Activated naive CD4-positive, alpha-beta T cell treated with anti-CD3 and anti-CD28 coated beads for 36 hours (primary cell): ENCODE measurements at regions of chr14 and their contacts with region 1.

Region 1: GRCh38 chr14:57390028-57390805 is at the start of gene NAA30:
- DNase-seq: peak; percentile 95
- H3K4me3 Mint-ChIP-seq: peak within 1 kb of the TSS; percentile 89
- H3K27ac Mint-ChIP-seq: peak within 1 kb of the TSS; percentile 93
- H3K4me1 Mint-ChIP-seq: peaks cover 35% of the 10 kb centered on the region
- H3K27me3 Mint-ChIP-seq: no peaks in the 10 kb centered on the region
- total RNA-seq, gene NAA30: 12.3 to 12.5 TPM

Region 2: DNA sequence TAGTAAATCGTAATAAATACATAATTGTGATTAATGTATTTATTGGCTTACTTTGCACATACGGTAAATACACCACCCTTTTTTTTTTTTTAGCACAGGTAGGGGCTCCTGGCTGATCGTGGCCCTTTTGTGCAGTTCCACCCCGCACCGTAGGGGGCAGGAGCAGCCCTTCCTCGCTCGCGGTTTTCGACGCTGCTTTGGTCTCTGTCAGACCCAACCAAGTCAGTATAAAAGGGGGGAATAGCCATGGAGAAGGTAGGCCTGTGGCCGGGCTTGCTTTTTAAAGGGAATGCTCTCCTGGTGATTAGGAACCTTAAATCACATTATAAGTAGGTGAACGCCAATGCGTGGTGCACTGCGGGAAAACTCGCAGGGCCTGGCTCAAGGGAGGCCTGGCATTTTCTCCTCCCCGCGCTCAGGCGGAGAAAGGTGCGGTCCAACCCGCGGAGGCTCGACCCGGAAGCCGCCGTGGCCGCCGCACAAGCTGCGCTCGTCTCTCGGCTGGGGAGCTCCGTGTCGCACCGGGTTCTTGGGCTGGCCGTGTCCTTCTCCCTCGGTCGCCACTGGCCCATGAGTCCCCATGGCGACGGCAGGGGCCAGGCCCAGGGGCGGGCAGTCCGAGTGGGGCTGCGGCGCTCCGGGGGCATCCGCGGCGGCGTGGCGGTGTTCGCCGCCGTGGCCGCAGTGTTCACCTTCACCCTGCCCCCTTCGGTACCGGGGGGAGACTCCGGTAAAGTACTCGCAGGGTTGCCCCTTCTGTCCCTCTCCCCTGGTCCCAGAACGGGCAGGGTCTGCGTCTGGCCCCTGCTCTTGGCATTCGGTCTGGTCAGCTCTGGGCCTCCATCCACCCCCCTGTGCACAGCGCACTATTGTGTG is 810.6 kb before region 1 on chr14 and contains the start of gene TMEM260:
- CTCF ChIA-PET with region 1: no interaction called
- intact Hi-C with region 1: loop called (anchors 2 kb)
- DNase-seq: peak; percentile 93
- H3K4me3 Mint-ChIP-seq: peak within 1 kb of the TSS; percentile 88
- H3K27ac Mint-ChIP-seq: peak within 1 kb of the TSS; percentile 93
- H3K4me1 Mint-ChIP-seq: peaks cover 35% of the 10 kb centered on the region
- H3K27me3 Mint-ChIP-seq: no peaks in the 10 kb centered on the region
- total RNA-seq, gene TMEM260: 9.6 to 11.9 TPM

Region 3: DNA sequence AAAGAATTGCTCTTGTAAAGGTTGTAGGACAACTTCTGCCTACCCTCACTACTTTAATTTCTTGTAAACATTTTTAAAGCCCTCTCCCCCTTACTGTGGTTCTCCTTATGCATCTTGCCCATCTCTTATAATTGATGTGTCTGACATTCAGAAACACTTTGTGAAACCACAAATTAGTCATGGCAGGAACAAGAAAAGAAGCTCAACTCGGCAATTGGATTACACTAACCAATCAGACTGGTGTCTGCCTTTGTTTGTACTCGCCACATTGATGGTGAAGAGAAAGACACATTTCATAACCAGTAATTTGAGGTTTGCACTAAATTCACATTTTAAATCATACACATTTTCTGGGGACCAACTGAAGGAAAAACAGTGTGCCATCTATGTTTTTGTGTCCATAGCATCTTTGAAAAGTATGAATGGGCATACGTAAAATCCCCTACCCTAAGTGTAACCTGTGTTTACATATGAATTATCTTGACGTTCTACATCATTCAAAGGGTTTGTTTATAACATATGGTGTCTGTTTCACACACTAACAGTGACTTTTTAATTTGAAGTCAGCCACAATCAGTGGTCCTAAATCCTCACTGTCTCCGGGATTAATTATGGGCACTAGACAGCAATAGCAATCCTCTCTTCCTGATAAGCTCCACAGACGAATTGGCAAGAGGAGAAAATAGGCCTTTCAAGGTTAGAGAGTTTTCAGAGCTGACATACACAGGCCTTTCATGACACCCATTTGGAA is 629.9 kb before region 1 on chr14:
- CTCF ChIA-PET with region 1: no interaction called
- intact Hi-C with region 1: no loop called
- DNase-seq: no peak
- H3K4me3 Mint-ChIP-seq: no peak overlapping the region
- H3K27ac Mint-ChIP-seq: no peak overlapping the region
- H3K4me1 Mint-ChIP-seq: no peaks in the 10 kb centered on the region
- H3K27me3 Mint-ChIP-seq: peaks cover 8% of the 10 kb centered on the region

Region 4: DNA sequence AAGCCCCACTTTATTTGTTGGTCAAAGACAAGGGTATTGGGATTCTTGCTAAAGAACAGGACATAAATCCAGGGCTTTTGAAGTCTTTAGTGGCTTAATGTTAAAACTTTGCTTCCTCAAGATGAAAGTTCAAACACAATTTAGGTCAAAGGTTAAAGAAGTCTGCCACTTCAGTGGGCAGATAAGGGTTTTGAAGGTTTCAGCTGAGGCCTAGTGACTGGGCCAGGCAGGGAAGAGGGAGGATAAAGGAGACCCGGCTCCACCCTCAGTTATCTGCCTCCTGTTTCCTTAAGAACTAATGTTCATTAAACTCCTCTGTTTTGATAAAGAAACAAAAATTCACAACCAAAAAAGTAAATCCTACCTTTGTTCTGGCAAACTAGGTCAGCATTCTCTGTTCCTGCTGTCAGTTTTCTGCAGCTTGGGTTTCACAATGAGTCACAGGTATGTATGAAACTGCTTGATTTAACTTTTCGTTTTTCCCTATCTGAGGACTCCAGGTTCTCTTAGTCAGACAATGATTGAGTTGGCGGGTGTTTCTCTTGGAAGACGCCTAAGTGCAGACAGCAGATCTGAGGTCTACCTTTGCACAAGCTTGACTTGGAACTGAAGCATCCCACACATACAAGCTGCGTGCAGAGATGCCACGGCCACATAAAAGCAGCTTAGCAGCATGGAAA is 329.8 kb before region 1 on chr14:
- CTCF ChIA-PET with region 1: no interaction called
- intact Hi-C with region 1: loop called (anchors 2 kb)
- DNase-seq: peak; percentile 52
- H3K4me3 Mint-ChIP-seq: no peak overlapping the region
- H3K27ac Mint-ChIP-seq: no peak overlapping the region
- H3K4me1 Mint-ChIP-seq: peaks cover 21% of the 10 kb centered on the region
- H3K27me3 Mint-ChIP-seq: peaks cover 8% of the 10 kb centered on the region

Region 5: GRCh38 chr14:57227083-57227482 is 163.1 kb before region 1 on chr14:
- CTCF ChIA-PET with region 1: no interaction called
- intact Hi-C with region 1: loop called (anchors 10 kb)
- DNase-seq: no peak
- H3K4me3 Mint-ChIP-seq: no peak overlapping the region
- H3K27ac Mint-ChIP-seq: no peak overlapping the region
- H3K4me1 Mint-ChIP-seq: peaks cover 7% of the 10 kb centered on the region
- H3K27me3 Mint-ChIP-seq: no peaks in the 10 kb centered on the region